T-cell (primary cell): ENCODE measurements at regions of chr16 and their contacts with region 1.

Region 1: GRCh38 chr16:3027945-3028712 is 4.3 kb downstream of the THOC6 start:
- DNase-seq: peak; percentile 64 to 94 (median 80)
- ATAC-seq: peak; percentile 46 to 53 (median 48)
- H3K4me3 ChIP-seq: no peak overlapping the region
- H3K4me3 Mint-ChIP-seq: peak overlapping the region in 1 of 3 donors; percentile 74
- H3K27ac ChIP-seq: no peak overlapping the region
- H3K27ac Mint-ChIP-seq: no peak overlapping the region
- H3K4me1 ChIP-seq: peaks cover 8 to 51% of the 10 kb centered on the region in 2 experiments
- H3K4me1 Mint-ChIP-seq: peaks cover 31 to 38% (median 37%) of the 10 kb centered on the region in 3 donors
- H3K27me3 ChIP-seq: peaks cover 7 to 46% of the 10 kb centered on the region in 2 experiments
- H3K27me3 Mint-ChIP-seq: peaks cover 22 to 28% of the 10 kb centered on the region in 2 donors

Region 2: DNA sequence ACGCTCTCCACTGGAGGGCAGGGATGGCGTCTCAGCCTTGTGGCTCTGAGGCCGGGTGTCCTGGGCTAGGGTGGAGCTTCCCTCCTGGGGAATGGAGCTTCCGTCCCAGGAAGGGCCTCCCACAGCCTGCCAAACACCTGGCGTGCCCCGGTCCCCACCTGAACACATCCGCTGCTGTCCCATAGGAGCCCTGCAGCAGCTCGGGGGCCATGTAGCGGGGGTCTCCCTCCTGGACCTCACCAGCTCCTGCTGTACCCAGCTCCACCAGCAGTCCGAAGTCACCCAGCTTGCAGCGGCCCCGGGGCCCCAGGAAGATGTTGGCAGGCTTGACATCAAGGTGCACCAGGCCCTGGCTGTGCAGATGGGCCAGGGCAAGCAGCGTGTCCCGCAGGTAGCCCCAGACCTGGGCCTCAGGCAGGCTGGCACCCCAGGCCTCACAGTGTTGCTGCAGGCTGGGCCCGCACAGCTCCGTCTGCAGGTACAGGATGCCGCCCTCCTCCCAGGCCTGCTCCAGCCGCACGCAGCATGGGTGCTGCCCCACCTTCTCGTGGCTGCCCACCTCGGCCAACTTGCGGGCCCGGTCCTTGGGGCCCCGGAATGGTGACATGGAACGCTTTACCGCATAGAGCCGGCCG is 52.9 kb before region 1 on chr16:
- CTCF ChIA-PET with region 1: no interaction called
- POLR2A ChIA-PET with region 1: no interaction called
- DNase-seq: no peak
- ATAC-seq: no peak
- H3K4me3 ChIP-seq: no peak overlapping the region
- H3K4me3 Mint-ChIP-seq: no peak overlapping the region
- H3K27ac ChIP-seq: no peak overlapping the region
- H3K27ac Mint-ChIP-seq: no peak overlapping the region
- H3K4me1 ChIP-seq: peaks cover 2 to 13% of the 10 kb centered on the region in 2 experiments
- H3K4me1 Mint-ChIP-seq: peaks cover 0 to 11% (median 0%) of the 10 kb centered on the region in 3 donors
- H3K27me3 ChIP-seq: peaks cover 0 to 32% of the 10 kb centered on the region in 2 experiments
- H3K27me3 Mint-ChIP-seq: peaks cover 0 to 4% of the 10 kb centered on the region in 2 donors

Region 3: GRCh38 chr16:3003582-3004302 is 24.4 kb before region 1 on chr16:
- CTCF ChIA-PET with region 1: interaction called, 6 to 29 read pairs
- POLR2A ChIA-PET with region 1: no interaction called
- DNase-seq: peak; percentile 82 to 98 (median 95)
- ATAC-seq: peak; percentile 97 to 99 (median 98)
- H3K4me3 ChIP-seq: no peak overlapping the region
- H3K4me3 Mint-ChIP-seq: peak overlapping the region; percentile 60 to 75 (median 72)
- H3K27ac ChIP-seq: no peak overlapping the region
- H3K27ac Mint-ChIP-seq: no peak overlapping the region
- H3K4me1 ChIP-seq: peaks cover 19 to 30% of the 10 kb centered on the region in 2 experiments
- H3K4me1 Mint-ChIP-seq: peaks cover 21 to 28% (median 28%) of the 10 kb centered on the region in 3 donors
- H3K27me3 ChIP-seq: peaks cover 0 to 52% of the 10 kb centered on the region in 2 experiments
- H3K27me3 Mint-ChIP-seq: peaks cover 3 to 20% of the 10 kb centered on the region in 2 donors